Ovary (tissue), 10 donors: ENCODE measurements at regions of chr5 and their contacts with region 1.

Region 1: GRCh38 chr5:87412630-87413342 is at the start of gene CCNH:
- DNase-seq: peak; percentile 97 to 99 (median 97)
- H3K4me3 ChIP-seq: peak within 1 kb of the TSS; percentile 75
- H3K27ac ChIP-seq: peak within 1 kb of the TSS; percentile 95
- H3K4me1 ChIP-seq: no peaks in the 10 kb centered on the region
- H3K27me3 ChIP-seq: no peaks in the 10 kb centered on the region
- CTCF ChIP-seq: no peak
- EP300 ChIP-seq: peak; percentile 96
- POLR2A ChIP-seq: peak; percentile 96
- total RNA-seq, gene CCNH: 37.8 to 160 (median 49.0) TPM

Region 2: DNA sequence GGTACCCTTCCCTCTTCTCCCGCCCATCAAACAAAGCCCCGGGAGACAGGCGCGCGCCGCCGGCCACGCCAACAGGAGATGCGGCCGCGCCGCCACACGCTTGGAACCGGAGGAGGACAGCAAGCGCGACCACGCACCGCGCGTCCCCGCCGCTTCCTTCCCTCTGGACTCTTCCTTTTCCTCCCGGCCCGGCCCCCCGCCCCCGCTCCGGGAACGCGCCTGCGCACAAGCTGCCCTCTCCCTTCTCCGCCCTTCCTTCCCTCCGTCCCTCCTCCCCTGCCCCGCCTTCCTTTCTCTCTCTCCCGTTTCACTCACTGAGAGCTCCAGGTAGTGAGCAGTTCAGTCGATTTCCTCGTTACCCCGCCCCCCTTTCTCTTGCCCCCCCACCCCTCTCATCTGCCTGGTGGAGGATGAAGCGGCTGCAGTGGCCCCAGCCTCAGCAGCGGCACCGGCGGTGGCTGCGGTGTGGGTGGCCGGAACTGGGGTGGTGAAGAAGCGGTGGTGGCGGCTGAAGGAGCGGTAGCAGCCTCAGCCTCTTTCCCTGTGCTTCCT is 145.1 kb before region 1 on chr5 and contains the start of gene RASA1:
- intact Hi-C with region 1: loop called in 1 of 4 experiments (anchors 10 kb)
- DNase-seq: peak; percentile 94 to 97 (median 95)
- H3K4me3 ChIP-seq: peak within 1 kb of the TSS; percentile 72
- H3K27ac ChIP-seq: peak within 1 kb of the TSS; percentile 68 to 81
- H3K4me1 ChIP-seq: peaks cover 2% of the 10 kb centered on the region
- H3K27me3 ChIP-seq: no peaks in the 10 kb centered on the region
- CTCF ChIP-seq: no peak
- EP300 ChIP-seq: no peak
- POLR2A ChIP-seq: peak; percentile 76
- total RNA-seq, gene RASA1: 22.5 to 33.9 (median 31.1) TPM

Region 3: DNA sequence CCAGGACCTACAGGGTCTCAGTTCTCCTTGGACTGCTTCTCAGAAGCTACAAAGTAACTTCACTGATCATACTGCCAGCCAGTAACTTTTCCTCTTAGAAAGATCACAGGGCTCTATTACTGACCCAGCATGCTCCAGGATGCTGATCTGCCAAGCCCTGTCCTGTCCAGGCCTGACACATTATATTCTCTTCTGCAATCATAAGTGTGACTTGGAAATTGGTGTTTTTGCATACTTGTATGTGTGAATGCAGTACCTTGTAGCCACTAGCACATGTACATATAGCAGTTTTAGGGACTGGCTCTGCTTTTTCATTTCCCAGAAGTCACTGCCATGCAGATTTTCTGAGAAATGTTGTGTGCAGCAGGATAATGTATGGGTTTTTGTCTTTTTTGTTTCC is 40.1 kb after region 1 on chr5:
- intact Hi-C with region 1: no loop called
- DNase-seq: no peak
- H3K4me3 ChIP-seq: no peak overlapping the region
- H3K27ac ChIP-seq: no peak overlapping the region
- H3K4me1 ChIP-seq: no peaks in the 10 kb centered on the region
- H3K27me3 ChIP-seq: no peaks in the 10 kb centered on the region
- CTCF ChIP-seq: no peak
- EP300 ChIP-seq: no peak
- POLR2A ChIP-seq: no peak

Region 4: DNA sequence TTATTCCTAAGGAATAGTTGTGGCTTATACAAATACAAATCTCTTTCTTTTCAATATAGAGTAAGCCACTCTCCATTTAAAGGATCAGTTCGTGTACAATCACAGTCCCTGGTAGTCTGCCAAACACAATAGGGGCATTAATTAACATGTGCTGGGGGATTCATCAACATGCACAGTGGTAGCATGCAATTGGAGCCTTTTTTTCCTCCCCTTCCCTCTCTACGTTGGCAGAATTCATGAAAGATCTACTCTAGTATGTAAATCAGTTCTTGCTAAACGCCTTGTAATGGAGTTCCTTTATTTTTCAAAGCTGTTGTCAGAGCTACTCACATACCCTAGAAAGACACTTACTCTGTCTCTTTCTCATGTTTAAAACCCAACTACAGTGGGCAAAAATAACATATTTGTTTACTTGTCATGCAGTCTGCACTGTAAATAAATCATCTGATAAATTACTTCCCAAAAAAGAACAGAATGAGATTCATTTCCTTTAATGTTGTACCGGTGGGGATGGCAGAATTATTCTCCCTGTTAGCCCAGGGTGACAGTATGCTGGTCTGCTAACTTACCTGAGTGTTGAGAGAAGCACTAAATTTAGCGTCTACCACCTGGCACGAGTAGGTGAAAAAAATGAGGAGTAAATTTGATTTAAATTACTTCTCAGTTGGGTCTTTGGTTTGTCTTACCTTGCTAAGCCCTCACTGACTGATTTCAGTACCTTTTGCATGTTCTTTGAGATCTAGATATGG is 341.4 kb after region 1 on chr5:
- intact Hi-C with region 1: no loop called
- DNase-seq: no peak
- H3K4me3 ChIP-seq: no peak overlapping the region
- H3K27ac ChIP-seq: no peak overlapping the region
- H3K4me1 ChIP-seq: no peaks in the 10 kb centered on the region
- H3K27me3 ChIP-seq: no peaks in the 10 kb centered on the region
- CTCF ChIP-seq: no peak
- EP300 ChIP-seq: no peak
- POLR2A ChIP-seq: no peak